ENCODE measurements at regions of chr11 and their contacts with region 1.

Region 1: DNA sequence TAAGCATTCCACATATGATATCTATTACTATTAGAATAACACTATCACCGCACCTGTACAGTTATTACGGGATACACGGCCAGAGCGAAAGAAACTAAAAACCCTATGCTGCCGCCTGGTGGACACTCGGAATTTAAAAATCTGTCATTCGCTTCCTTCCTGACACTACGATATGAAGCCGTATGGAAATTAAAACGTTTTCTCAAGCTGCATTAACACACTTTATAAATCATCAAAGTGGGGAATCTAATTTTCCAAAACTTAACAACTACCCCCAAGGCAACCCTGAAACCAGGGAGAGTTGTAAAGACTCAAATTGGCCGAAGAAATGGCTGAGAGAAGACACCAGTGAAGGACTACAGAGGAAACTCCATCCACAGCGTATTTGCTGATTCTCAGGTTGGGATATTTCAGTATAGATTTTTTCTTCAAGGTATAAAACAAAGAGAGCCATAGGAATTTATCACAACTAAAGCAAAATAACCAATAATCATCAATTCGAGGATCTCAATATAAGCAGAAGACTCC is 1.4 kb downstream of the CCDC73 start:
- DNase-seq: peak; percentile 81
- ATAC-seq: peak; percentile 66
- H3K4me3 ChIP-seq: peak overlapping the region; percentile 62
- H3K27ac ChIP-seq: peak overlapping the region; percentile 86
- H3K4me1 ChIP-seq: peaks cover 24% of the 10 kb centered on the region
- H3K27me3 ChIP-seq: no peaks in the 10 kb centered on the region
- CTCF ChIP-seq: peak; percentile 80

Region 2: DNA sequence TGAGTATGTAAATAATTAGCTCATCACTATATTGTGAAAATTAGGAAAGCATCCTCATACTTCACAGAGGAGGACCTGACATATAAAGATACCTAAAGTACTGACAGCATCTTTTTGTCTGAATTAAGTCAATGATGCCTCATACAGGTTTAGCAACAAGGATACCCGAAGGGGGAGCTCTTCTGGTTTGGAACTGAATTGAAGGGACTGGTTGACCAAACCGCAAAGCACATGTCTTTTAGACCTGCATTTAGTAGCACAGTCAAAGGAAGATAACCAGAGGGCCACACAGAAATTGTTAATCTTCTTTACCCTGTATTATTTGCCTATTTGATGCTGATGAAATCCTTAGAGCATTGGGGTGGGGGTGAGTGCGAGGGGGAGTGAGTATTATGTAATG is 344.8 kb before region 1 on chr11:
- CTCF ChIA-PET with region 1: no interaction called
- POLR2A ChIA-PET with region 1: no interaction called
- intact Hi-C with region 1: loop called (anchors 5 kb)
- DNase-seq: peak; percentile 74
- ATAC-seq: peak; percentile 85
- H3K4me3 ChIP-seq: no peak overlapping the region
- H3K27ac ChIP-seq: no peak overlapping the region
- H3K4me1 ChIP-seq: 0 out of 2 replicates have a peak, but pooled peaks cover 4% of the 10 kb centered on the region
- H3K27me3 ChIP-seq: no peaks in the 10 kb centered on the region
- CTCF ChIP-seq: peak; percentile 75

Region 3: DNA sequence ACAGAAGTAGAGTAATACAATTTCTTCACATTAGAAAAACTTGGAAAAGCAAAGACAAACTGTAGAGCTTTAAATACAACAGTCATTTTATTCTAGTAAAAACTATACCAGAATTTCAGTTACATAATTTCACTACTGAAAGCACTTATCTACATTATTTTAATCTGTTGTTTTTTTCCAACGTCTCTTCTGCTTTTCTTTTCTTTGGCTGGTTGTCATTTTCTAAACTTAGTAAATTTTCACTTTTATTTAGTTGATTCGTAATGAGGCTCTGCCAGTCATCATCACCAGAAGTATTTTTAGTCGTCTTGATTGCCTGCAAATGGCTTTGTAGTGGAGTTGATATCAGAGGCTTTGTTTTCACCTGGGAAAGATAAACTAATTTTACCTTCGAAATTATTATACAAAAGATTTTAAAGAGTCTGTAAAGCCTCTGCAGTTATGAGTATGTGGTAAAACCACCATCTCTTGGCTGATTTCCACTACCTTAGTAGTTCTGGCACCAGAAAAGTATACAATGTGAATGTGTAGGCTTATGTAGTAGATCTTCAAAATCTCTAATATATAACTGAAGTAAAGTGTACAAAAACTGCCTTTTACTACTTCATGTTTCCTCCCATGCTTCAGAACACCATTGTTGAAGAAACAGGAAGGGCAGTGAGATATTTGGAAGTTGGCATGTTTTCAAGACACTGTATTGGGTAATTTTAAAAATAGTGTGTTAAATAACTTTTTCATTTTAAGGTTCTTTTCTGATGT is 190.2 kb before region 1 on chr11:
- CTCF ChIA-PET with region 1: no interaction called
- POLR2A ChIA-PET with region 1: no interaction called
- intact Hi-C with region 1: loop called (anchors 5 kb)
- DNase-seq: peak; percentile 21
- ATAC-seq: peak; percentile 46; the same call in 1 of the 2 replicates
- H3K4me3 ChIP-seq: no peak overlapping the region
- H3K27ac ChIP-seq: no peak overlapping the region
- H3K4me1 ChIP-seq: no peaks in the 10 kb centered on the region
- H3K27me3 ChIP-seq: no peaks in the 10 kb centered on the region
- CTCF ChIP-seq: no peak

Region 4: DNA sequence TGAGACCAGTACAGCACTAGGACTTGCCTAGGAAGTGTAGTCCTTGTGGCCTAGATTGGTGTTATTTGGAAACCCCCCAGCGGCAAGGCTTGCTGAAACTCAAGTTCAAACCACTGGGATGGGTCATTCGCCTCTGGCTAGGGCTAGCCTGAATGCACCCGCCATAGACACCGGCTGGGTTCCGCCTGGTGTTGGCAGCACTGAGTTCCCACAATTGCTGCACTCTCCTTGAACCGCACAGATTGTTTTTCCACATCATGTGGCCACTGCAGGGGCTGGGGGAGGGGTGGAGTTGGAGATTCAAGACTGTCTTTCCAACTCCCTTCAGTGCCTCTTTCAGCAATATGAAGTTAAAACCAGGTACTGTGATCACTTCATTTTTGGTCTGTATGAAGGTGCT is 41.6 kb before region 1 on chr11:
- CTCF ChIA-PET with region 1: no interaction called
- POLR2A ChIA-PET with region 1: interaction called, 6 read pairs
- intact Hi-C with region 1: loop called (anchors 1 kb)
- DNase-seq: no peak
- ATAC-seq: no peak
- H3K4me3 ChIP-seq: no peak overlapping the region
- H3K27ac ChIP-seq: no peak overlapping the region
- H3K4me1 ChIP-seq: no peaks in the 10 kb centered on the region
- H3K27me3 ChIP-seq: no peaks in the 10 kb centered on the region
- CTCF ChIP-seq: no peak

Region 5: GRCh38 chr11:32972781-32973180 is 179.8 kb after region 1 on chr11:
- CTCF ChIA-PET with region 1: no interaction called
- POLR2A ChIA-PET with region 1: no interaction called
- intact Hi-C with region 1: no loop called
- DNase-seq: no peak
- ATAC-seq: no peak
- H3K4me3 ChIP-seq: no peak overlapping the region
- H3K27ac ChIP-seq: no peak overlapping the region
- H3K4me1 ChIP-seq: no peaks in the 10 kb centered on the region
- H3K27me3 ChIP-seq: no peaks in the 10 kb centered on the region
- CTCF ChIP-seq: no peak

Measured in PC-3 (cell line).